ENCODE measurements at regions of chr4 and their contacts with region 1.

Region 1: DNA sequence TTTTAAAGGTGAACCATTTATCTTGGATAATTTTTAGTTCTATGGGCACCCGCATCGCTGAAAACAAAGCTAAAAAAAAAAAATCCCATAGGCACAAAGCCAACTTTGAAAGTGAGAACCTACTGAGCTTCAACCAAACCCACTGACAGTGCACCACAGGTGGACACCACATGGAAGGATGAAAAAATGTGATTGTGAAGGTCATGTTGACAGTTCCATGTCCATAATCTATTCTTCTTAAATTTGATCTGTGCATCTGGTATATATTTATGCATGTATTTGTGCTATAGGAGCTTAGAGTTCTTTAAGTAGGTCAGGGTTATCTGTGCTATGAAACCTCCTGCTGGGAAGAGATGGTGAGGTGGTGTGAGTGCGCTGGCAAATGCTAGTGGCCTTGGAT is 374.3 kb downstream of the SPRY1 start:
- H3K4me3 Mint-ChIP-seq: no peak overlapping the region
- H3K27ac Mint-ChIP-seq: no peak overlapping the region
- H3K4me1 Mint-ChIP-seq: peaks cover 4% of the 10 kb centered on the region
- H3K27me3 Mint-ChIP-seq: no peaks in the 10 kb centered on the region

Region 2: DNA sequence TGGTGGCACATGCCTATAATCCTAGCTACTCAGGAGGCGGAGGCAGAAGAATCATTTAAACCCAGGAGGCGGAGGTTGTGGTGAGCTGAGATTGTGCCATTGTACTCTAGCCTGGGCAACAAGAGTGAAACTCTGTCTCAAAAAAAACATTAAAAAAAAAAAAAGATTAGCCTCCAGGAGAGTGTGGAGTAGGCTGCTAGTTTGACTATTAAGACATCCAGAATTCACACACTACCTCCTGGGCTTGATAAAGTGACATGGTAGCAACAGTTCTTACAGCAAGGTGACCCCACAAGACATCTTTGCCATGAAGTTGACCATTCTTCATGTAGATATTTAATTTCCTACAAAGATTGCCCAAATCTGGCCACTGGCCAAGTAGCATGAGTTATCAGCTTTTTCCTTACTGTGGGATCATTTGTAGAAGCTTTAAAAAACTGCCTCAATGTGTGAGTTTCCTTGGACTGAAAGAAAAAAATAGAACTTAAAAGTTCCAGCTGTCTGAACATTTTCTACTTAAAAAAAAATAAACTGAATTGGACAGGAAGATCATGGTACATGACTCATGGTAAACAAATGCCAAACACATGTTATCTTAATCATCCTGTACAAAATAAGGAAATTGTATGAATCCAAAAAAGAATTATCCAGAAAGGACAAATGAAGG is 409.6 kb before region 1 on chr4:
- intact Hi-C with region 1: no loop called
- H3K4me3 Mint-ChIP-seq: no peak overlapping the region
- H3K27ac Mint-ChIP-seq: no peak overlapping the region
- H3K4me1 Mint-ChIP-seq: peaks cover 15% of the 10 kb centered on the region
- H3K27me3 Mint-ChIP-seq: no peaks in the 10 kb centered on the region

Region 3: GRCh38 chr4:124018383-124019317 is 247.8 kb after region 1 on chr4:
- intact Hi-C with region 1: loop called (anchors 5 kb)
- H3K4me3 Mint-ChIP-seq: peak overlapping the region; percentile 44
- H3K27ac Mint-ChIP-seq: peak overlapping the region; percentile 92
- H3K4me1 Mint-ChIP-seq: peaks cover 24% of the 10 kb centered on the region
- H3K27me3 Mint-ChIP-seq: no peaks in the 10 kb centered on the region

Region 4: DNA sequence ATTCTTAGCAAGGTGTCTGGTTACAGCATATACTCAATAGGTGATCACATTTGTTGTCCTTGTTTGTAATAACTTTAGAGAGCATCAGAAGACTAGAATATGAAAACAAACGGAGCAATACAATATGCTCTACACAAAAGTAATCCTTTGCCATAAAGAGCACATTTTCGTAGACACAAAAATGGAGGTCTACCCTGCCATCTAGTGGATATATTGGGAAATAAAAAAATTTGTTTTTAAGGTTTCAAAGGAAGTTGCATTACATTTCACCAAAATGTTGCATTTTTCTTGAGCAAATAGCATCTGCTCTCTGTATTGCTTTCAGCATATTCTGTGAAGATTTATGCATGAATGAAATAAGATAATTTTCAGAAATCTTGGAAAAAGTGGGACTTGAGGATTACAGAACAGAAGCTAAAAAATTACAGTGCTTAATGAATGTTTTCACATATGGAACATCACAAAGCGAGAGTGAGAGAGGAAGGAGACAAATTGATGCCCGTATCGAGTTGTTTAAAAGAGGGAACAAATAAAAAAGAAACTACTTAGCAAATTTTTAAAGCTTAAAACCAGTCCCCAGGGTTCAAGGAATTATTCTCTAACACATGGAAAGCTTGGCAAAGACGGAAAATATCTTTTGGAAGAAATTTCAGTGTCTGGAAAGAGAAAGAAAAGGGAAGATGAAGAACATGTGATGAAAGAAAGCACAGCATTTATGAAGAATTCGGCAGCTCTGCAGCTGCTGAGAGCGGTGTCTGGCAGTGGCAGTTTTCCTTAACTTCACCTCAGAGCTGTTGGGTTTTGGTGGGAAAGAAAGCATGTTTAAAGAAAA is 551.6 kb after region 1 on chr4:
- intact Hi-C with region 1: loop called (anchors 5 kb)
- H3K4me3 Mint-ChIP-seq: no peak overlapping the region
- H3K27ac Mint-ChIP-seq: no peak overlapping the region
- H3K4me1 Mint-ChIP-seq: no peaks in the 10 kb centered on the region
- H3K27me3 Mint-ChIP-seq: no peaks in the 10 kb centered on the region